ENCODE measurements at regions of chr6 and their contacts with region 1.

Region 1: DNA sequence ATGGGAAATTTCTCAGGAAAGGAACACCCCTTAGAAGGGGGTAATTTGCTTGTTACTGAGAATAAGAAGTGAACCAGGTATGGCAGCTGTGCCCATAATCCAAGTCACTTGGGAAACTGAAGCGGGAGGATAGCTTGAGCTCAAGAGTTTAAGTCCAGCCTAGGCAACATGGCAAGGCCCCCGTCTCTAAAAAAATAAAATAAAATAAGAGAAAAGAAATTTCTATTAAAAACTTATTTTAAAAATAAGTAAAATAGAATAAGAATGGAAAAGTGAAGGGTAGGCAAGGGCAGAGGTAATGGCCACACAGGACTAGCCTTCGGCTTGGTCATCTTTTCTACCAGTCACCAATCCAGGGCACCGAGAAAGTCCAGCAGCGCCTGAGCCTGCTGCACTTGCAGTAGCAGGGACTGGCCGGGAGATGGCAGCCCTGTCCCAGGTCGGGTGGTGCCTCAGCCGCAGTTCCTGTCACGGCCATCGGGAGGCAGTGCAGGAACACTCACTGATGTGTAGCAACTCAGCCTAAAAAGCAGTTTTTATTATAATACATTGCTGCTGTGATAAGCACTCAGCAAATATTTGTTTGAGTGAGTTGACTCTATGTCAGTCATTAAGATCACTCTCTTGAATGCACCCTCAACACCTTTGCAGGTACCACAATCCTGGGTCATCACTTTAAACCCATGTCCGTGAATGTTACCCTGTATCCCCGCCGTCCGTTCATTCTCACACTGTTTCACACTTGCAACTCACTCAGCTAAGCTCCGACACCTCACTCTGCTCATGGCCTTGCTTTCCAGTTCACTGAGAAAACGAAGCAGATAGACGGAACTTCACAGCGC is 23.2 kb upstream of the GCM1 start:
- DNase-seq: peak; percentile 76 to 98 (median 93)

Region 2: GRCh38 chr6:53119772-53120409 is 51.9 kb before region 1 on chr6:
- intact Hi-C with region 1: no loop called
- DNase-seq: no peak

Region 3: DNA sequence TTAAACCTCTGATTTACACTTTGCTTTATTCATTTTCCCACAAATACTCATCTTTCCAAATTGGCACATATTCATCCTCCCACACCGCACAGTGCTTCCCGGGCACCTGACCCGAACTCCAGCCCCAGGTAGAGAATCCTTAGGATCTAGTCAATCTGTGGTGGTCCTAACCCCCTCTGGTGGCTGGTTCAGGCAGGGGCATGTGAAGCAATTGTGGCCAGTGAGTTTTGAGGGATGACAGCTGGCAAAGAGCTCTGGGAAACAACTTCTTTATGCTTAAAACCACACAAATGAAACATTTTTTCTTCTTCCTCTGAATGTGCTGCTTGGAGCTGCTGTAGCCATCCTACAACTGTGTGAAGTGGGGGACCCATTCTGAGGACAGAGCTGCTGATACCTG is 122.3 kb after region 1 on chr6:
- intact Hi-C with region 1: no loop called
- DNase-seq: peak in 11 of 42 donors; percentile 14 to 55 (median 39)

Region 4: DNA sequence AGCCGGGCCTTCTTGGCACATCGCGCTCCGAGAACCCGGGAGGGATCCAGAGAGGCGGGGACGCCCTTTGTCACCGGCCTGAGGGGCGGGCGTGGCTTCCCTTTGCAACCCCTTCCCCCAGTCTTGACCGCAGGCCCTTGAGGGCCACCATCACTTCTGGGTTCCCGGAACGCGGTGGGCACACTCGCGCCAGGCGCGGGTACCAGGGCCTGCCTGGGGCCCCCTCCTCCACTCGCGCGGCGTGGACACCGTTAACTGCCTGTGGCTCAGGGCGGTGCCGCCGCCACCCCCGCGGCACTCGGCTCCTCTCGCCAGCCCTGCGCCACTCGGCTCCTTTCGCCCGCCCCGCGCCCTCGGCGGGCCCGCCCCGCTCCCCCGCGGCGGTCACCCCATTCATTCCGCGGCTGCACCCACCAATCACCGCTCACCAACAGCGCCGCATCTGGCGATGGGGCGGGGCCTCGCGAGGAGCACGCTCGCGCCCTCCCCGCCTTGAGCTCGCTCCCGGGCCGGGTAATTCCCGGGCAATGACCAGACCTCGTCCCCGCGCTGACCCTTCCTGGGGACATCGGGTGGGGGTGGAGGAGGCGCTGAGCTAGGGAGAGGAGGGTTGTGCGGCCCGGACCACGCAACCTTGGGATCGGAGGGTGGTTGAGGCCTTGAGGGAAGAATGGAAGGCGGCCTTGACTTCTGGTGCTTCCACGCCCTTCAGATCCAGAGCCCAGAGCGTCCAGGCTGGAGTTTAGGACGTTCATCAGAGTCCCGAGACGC is 187.4 kb after region 1 on chr6:
- intact Hi-C with region 1: loop called (anchors 10 kb)
- DNase-seq: peak; percentile 93 to 99 (median 98)

Region 5: DNA sequence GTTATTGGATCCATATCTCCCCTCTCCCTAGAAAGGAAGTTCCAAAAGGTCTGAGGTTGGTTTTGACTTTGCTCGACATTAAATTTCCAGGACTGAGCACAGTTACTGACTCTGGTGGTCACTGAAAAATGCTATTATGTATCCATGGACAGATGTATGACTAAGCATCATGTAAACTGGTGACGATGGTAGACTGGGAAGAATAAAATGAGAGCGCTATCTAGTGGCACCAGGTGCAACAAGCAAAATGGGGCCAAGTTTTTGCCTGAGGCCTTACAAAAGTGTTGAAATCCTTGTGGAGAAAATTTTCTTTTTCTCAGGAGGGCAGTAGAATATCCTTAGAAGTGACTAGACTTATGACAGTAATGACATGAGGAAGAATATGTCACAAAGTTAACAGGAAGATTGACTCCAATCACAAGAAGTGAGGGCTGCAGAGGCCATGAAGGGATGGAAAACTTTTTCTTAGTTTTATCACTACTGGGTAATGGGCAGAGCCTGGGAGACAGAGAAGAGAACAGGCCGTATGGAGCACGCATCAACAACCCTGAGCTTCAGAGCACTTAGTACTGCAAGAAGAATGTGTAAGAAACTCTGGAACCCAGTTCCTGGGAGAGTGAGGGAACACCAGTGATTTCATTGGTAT is 265.9 kb after region 1 on chr6:
- intact Hi-C with region 1: loop called (anchors 5 kb)
- DNase-seq: peak in 29 of 42 donors; percentile 13 to 80 (median 46)

Region 6: DNA sequence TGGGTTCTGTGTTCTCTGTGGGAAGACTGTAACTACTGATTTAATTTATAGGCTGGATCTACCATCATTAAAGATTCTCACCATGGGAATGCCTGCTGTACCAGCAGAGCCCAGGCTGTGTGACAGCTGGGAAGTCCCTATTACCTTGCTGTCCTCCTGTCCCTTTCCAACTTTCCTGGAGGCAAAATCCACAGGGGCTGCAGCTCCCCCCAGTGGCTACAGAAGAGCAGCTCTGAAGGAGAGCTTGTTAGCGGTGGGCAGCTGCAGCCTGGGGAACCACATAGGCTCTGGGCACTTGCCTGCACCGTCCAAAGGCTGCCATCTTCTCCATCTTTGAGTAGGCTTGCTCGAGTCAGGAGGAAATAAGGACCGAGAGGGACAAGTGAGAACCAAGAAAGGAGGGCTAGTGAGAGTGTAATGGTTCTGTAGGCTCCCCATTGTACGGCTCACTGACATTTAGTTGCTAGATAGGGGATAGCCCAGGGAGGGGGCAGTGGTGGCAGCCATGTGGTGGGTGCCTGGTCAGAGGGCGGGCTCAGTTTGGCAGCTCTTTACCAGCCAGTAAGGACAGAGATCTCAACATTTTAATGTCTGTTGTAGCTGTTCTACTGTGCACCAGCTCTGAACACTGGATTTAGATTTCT is 784.4 kb after region 1 on chr6:
- intact Hi-C with region 1: no loop called
- DNase-seq: peak; percentile 42 to 94 (median 83)